PC-3 (cell line): ENCODE measurements at regions of chr14 and their contacts with region 1.

Region 1: DNA sequence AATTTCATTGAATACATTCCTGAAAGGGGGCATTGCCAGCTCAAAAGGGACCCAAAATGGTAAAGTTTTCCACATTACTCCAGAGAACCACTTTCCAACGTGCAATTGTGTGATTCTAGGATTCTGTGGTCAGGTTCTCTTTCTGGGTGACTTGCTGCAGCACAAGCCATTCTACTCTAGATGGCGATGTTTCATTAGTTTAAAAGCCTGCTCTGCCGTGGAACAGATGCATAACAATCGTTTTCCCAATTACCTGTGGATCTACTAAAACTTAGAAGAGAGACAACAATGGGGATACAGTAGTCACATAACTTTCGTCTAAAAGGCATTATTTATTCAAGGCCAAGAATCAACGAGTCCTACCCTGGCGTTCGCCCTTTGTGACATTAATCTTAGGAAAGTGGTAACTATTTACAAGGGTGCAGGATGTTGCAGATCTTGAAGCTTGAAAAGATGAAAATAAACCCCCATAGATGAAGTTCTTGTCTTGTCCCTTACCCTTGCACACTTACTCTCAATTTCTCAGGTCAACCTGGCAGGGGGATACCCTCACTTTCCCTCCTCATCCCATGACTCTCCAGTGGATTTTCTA is 400.9 kb downstream of the SNAPC1 start:
- DNase-seq: peak; percentile 79
- ATAC-seq: peak; percentile 92
- H3K4me3 ChIP-seq: no peak overlapping the region
- H3K27ac ChIP-seq: no peak overlapping the region
- H3K4me1 ChIP-seq: no peaks in the 10 kb centered on the region
- H3K27me3 ChIP-seq: peaks cover 43% of the 10 kb centered on the region
- CTCF ChIP-seq: peak; percentile 95

Region 2: DNA sequence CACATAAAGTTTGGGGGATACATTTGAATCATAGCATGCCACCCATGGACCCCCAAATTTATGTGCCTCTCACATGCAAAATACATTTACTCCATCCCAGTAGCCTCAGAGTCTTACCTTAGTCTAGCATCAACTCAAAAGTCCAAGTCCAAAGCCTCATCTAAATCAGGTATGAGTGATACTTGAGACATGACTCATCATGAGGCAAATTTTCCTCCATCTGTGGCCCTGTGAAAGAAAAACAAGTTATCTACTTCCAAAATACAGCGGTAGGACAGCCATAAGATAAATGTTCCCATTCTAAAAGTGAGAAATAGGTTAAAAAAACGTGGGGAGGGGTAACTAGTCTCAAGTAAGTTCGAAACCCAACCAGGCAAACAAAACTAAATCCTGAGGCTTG is 43.4 kb after region 1 on chr14:
- CTCF ChIA-PET with region 1: no interaction called
- POLR2A ChIA-PET with region 1: no interaction called
- intact Hi-C with region 1: no loop called
- DNase-seq: peak; percentile 6
- ATAC-seq: no peak
- H3K4me3 ChIP-seq: no peak overlapping the region
- H3K27ac ChIP-seq: no peak overlapping the region
- H3K4me1 ChIP-seq: peaks cover 10% of the 10 kb centered on the region
- H3K27me3 ChIP-seq: no peaks in the 10 kb centered on the region
- CTCF ChIP-seq: no peak

Region 3: GRCh38 chr14:63039800-63040380 is 876.8 kb after region 1 on chr14:
- CTCF ChIA-PET with region 1: interaction called, 4 read pairs
- POLR2A ChIA-PET with region 1: no interaction called
- intact Hi-C with region 1: loop called (anchors 1 kb)
- DNase-seq: peak; percentile 86
- ATAC-seq: peak; percentile 100
- H3K4me3 ChIP-seq: no peak overlapping the region
- H3K27ac ChIP-seq: no peak overlapping the region
- H3K4me1 ChIP-seq: no peaks in the 10 kb centered on the region
- H3K27me3 ChIP-seq: peaks cover 62% of the 10 kb centered on the region
- CTCF ChIP-seq: peak; percentile 71

Region 4: DNA sequence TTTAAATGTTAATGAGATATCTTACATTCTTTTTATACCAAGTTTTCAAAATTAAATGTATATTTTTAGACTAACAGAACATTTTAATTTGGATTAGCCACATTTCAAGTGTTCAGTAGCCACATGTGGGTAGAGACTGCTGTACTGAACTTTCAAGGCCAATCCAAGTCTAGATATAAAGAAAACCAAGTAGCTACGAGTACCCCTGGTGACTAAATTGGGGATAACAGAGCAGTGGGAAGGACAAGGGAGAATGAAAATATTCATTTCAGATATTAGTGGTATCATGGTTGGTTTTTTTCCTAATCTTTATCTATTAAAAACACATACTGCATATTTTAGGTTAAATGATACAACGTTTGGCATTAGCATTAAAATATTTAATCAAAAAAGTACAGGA is 971.7 kb after region 1 on chr14:
- CTCF ChIA-PET with region 1: no interaction called
- POLR2A ChIA-PET with region 1: no interaction called
- intact Hi-C with region 1: loop called (anchors 1 kb)
- DNase-seq: peak; percentile 48
- ATAC-seq: peak; percentile 59
- H3K4me3 ChIP-seq: no peak overlapping the region
- H3K27ac ChIP-seq: no peak overlapping the region
- H3K4me1 ChIP-seq: no peaks in the 10 kb centered on the region
- H3K27me3 ChIP-seq: no peaks in the 10 kb centered on the region
- CTCF ChIP-seq: peak; percentile 58

Region 5: DNA sequence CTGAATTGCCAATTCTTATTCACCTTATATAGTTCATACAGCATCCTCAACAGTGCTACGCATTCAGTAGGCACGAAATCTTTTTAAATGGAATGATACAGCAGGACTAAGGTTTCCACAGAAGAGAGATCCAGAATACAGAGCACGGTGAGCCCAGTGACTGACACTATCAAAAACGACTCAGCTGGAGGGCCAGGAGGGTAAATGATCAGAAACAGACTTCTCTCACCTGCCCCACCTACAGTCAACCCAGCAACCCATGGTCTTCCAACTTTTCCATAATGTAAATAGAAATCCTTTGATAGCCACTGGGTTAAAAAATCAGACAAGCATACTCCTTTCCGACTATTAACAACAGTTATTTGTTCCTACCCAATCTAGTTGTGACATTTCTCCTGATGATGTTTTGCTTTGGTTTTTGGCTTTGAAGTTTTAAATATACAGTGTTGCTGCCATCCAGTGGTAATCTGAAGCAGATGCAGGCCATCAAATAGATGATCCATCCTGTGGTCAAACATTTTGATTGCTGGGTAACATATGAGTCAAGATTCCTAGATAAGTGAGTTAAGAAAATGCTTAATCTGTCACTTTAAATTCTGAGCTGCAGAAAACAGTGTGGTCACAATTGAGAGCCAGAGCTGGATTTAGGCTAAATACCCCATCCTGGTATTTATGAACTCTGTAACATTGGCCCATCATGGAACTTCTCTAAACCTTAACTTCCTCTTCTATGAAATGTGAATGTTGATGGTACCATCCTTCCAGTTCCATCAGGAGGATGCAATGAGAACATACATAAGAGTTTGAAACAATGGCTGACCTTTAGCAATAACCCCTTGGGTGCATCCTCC is 1113.6 kb after region 1 on chr14:
- CTCF ChIA-PET with region 1: no interaction called
- POLR2A ChIA-PET with region 1: no interaction called
- intact Hi-C with region 1: loop called (anchors 1 kb)
- DNase-seq: peak; percentile 76
- ATAC-seq: peak; percentile 84
- H3K4me3 ChIP-seq: no peak overlapping the region
- H3K27ac ChIP-seq: no peak overlapping the region
- H3K4me1 ChIP-seq: no peaks in the 10 kb centered on the region
- H3K27me3 ChIP-seq: peaks cover 43% of the 10 kb centered on the region
- CTCF ChIP-seq: peak; percentile 98

Region 6: DNA sequence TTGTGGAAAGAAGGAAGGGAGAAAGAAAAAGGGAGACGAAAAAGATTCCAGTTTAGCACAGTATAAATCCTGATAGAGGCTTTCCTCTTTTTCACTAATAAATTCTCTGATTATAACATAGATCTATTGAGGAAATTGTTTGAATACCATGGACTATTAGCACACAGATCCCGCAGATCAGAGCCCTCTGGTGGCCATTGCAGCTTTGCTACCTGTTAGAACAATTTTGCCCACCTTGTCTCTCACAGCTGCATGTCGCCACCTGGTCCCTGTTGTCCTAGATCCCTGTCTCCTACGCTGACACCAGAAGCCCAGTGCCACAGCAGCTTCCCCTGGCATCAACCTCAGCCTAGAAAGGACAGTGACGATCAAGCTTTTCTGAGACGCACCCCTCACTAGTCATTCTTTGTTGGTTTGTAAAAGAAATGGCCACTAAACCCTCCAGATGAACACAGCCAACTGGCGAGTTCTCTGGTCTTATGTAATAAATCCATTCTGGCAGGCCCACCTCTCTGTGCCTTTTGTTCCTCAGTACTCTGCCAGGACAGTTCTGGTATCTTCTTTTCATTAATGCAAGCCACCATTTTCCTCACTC is 1145.7 kb after region 1 on chr14:
- CTCF ChIA-PET with region 1: no interaction called
- POLR2A ChIA-PET with region 1: no interaction called
- intact Hi-C with region 1: loop called (anchors 1 kb)
- DNase-seq: peak; percentile 55
- ATAC-seq: peak; percentile 93
- H3K4me3 ChIP-seq: no peak overlapping the region
- H3K27ac ChIP-seq: no peak overlapping the region
- H3K4me1 ChIP-seq: no peaks in the 10 kb centered on the region
- H3K27me3 ChIP-seq: peaks cover 59% of the 10 kb centered on the region
- CTCF ChIP-seq: peak; percentile 82

Region 7: GRCh38 chr14:63361790-63362189 is 1198.7 kb after region 1 on chr14:
- CTCF ChIA-PET with region 1: no interaction called
- POLR2A ChIA-PET with region 1: no interaction called
- intact Hi-C with region 1: loop called (anchors 5 kb)
- DNase-seq: peak; percentile 12
- ATAC-seq: peak; percentile 78
- H3K4me3 ChIP-seq: no peak overlapping the region
- H3K27ac ChIP-seq: no peak overlapping the region
- H3K4me1 ChIP-seq: 0 out of 2 replicates have a peak, but pooled peaks cover 4% of the 10 kb centered on the region
- H3K27me3 ChIP-seq: peaks cover 15% of the 10 kb centered on the region
- CTCF ChIP-seq: peak; percentile 45